ENCODE measurements at regions of chr20 and their contacts with region 1.

Region 1: GRCh38 chr20:40689943-40690835 is 1.2 kb upstream of the MAFB start:
- DNase-seq: peak; percentile 59
- ATAC-seq: peak; percentile 56
- H3K4me3 Mint-ChIP-seq: peak overlapping the region; percentile 78
- H3K27ac Mint-ChIP-seq: no peak overlapping the region
- H3K4me1 Mint-ChIP-seq: peaks cover 19% of the 10 kb centered on the region
- H3K27me3 Mint-ChIP-seq: peaks cover 68% of the 10 kb centered on the region
- CTCF ChIP-seq: no peak

Region 2: DNA sequence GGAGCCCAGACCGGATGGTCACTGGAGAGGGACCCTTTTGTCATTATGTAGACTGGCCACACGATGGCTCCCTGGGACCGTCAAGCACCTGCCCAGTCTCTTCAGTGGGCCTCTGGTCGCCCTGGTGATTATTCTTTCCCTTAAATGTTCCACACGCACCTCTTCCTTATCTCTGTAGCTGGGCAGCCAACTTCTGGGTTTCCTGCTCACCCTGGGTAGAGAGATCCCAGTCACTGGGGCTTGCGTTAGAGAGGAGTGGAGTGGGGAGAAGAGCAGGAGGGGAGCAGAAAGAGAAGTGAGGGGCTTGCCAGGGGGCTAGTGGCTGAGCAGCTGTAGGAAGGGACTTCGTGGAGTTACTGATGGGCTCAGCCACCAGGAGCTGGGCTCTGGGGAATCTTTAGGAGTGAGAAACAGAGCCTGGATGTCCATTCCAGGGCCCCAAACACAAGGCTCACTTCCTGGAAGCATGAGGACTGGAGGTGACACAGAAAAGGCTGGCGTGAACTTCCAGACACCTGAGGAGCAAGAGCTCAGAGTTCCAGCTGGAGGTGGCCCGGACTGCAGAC is 1577.9 kb before region 1 on chr20:
- CTCF ChIA-PET with region 1: no interaction called
- POLR2A ChIA-PET with region 1: no interaction called
- intact Hi-C with region 1: loop called (anchors 2 kb)
- DNase-seq: no peak
- ATAC-seq: no peak
- H3K4me3 Mint-ChIP-seq: no peak overlapping the region
- H3K27ac Mint-ChIP-seq: no peak overlapping the region
- H3K4me1 Mint-ChIP-seq: no peaks in the 10 kb centered on the region
- H3K27me3 Mint-ChIP-seq: peaks cover 36% of the 10 kb centered on the region
- CTCF ChIP-seq: no peak

Region 3: DNA sequence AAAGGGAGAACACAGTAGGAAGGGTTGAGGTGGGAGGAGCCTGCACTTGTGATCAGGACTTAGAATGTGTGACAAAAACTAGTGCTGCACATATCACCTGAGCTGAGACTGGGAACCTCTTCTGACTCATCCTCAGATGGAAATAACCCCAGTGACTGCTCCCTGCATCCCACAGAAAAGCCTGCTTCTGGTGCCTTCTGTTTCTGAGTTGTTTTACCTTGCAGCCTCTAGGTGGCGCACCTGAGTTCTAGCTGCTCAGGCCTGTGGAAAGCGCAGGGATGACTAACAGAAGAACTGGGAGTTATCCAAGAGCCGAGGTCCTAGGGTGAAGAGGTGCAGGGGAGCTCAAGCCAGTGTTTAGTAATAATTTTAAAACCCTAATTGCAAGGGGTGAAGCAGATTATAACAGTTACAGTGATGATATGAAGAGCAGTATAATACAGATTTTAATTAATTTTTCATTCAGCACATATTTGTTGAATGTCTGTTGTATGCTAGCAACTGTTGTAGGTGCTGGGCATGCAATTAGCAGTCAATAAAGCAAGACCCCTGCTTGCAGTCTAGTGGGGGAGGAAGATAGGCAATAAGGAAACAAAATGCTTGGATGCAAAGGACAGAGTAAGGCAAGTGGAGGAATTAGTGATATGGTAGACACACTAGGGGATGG is 1425.5 kb before region 1 on chr20:
- CTCF ChIA-PET with region 1: interaction called, 10 read pairs
- POLR2A ChIA-PET with region 1: no interaction called
- intact Hi-C with region 1: loop called (anchors 1 kb)
- DNase-seq: no peak
- ATAC-seq: no peak
- H3K4me3 Mint-ChIP-seq: no peak overlapping the region
- H3K27ac Mint-ChIP-seq: no peak overlapping the region
- H3K4me1 Mint-ChIP-seq: no peaks in the 10 kb centered on the region
- H3K27me3 Mint-ChIP-seq: peaks cover 6% of the 10 kb centered on the region
- CTCF ChIP-seq: peak; percentile 74

Region 4: DNA sequence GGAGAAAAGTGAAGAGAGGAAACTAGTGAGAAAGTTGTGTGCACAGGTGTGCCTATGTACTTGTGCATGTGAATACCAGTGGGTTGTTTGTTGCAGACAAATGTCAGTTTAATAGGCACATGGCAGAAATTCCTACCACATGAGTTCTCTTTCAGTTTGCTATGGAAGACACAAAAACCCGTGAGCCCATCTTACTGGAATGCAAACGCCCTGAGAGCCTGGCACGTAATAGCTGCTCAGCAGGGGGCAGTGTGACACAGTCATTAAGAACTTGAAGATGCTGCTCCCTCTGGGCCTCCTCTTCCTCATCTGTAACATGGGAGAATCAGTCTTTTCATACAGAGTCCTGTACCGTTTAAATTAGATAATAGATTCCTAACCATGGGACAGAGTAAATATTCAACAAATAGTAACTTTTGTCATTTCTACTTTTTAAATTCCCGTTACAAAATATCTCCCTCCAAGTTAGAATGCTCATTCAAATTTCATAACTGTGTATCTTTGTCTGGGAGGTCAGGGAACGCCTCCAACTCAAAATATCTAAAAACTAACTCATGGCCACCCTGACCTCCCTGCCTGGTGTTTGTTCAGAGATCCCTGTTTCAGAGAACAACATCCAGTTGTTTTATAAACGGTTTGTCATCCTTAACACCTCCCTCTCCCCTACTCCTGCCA is 804.1 kb before region 1 on chr20:
- CTCF ChIA-PET with region 1: no interaction called
- POLR2A ChIA-PET with region 1: no interaction called
- intact Hi-C with region 1: loop called (anchors 2 kb)
- DNase-seq: no peak
- ATAC-seq: no peak
- H3K4me3 Mint-ChIP-seq: no peak overlapping the region
- H3K27ac Mint-ChIP-seq: no peak overlapping the region
- H3K4me1 Mint-ChIP-seq: no peaks in the 10 kb centered on the region
- H3K27me3 Mint-ChIP-seq: no peaks in the 10 kb centered on the region
- CTCF ChIP-seq: no peak

Region 5: DNA sequence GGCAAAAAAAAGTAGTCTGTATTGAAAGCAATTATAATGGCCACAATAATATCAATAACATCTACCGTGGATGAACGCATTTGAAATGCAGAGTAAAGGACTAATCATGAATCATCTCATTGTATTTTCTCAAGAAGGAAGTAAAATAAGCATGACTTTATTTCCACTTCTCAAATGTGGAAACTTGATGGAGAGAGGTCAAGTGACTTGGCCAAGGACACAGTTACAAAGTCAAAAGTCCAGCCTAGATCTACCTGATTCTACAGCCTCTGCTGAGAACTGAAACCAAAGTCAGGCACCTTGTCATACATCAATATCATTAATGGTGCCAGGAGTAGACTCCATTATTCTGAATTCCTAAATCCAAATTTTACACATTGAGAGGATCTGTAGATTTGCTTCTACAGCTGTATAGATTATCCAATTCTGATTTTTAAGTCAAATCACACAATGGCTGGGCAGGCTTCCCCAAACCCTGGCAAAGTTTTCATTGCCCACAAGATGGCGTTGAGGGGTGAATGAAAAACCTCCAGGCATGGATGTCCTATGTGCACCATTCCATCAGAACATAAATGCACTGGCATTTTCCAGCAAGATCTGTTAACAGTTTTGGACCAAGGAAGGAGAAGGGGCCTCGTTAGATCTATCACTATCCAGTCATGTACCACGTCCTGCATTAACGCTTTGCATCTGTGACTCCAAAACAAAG is 424.2 kb before region 1 on chr20:
- CTCF ChIA-PET with region 1: no interaction called
- POLR2A ChIA-PET with region 1: no interaction called
- intact Hi-C with region 1: loop called (anchors 10 kb)
- DNase-seq: no peak
- ATAC-seq: no peak
- H3K4me3 Mint-ChIP-seq: no peak overlapping the region
- H3K27ac Mint-ChIP-seq: no peak overlapping the region
- H3K4me1 Mint-ChIP-seq: no peaks in the 10 kb centered on the region
- H3K27me3 Mint-ChIP-seq: no peaks in the 10 kb centered on the region
- CTCF ChIP-seq: no peak

Region 6: GRCh38 chr20:40431112-40432010 is 258.8 kb before region 1 on chr20:
- CTCF ChIA-PET with region 1: no interaction called
- POLR2A ChIA-PET with region 1: no interaction called
- intact Hi-C with region 1: no loop called
- DNase-seq: no peak
- ATAC-seq: no peak
- H3K4me3 Mint-ChIP-seq: no peak overlapping the region
- H3K27ac Mint-ChIP-seq: no peak overlapping the region
- H3K4me1 Mint-ChIP-seq: no peaks in the 10 kb centered on the region
- H3K27me3 Mint-ChIP-seq: peaks cover 2% of the 10 kb centered on the region
- CTCF ChIP-seq: no peak

Region 7: DNA sequence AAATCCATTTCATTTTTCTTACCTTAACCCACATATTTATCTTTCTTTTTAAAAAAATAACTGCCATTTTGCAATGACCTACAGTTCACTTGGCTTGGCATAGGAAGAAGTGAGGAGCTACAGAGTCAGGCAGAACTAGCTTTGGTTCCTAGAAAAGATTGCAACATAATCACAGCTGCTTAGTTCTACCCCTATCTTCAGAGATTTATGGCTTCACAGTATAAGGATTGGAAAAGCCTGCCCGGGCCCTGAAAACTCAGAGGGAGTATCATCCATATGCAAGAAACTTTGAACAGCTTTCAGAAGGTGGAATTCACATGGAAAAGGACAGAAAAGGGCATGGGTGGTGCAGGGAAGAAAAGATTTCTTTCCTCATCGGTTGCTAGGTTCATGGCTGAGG is 1702.3 kb after region 1 on chr20:
- CTCF ChIA-PET with region 1: no interaction called
- POLR2A ChIA-PET with region 1: no interaction called
- intact Hi-C with region 1: no loop called
- DNase-seq: no peak
- ATAC-seq: no peak
- H3K4me3 Mint-ChIP-seq: no peak overlapping the region
- H3K27ac Mint-ChIP-seq: no peak overlapping the region
- H3K4me1 Mint-ChIP-seq: no peaks in the 10 kb centered on the region
- H3K27me3 Mint-ChIP-seq: no peaks in the 10 kb centered on the region
- CTCF ChIP-seq: no peak